A549 (cell line): ENCODE measurements at regions of chrX and their contacts with region 1.

Region 1: DNA sequence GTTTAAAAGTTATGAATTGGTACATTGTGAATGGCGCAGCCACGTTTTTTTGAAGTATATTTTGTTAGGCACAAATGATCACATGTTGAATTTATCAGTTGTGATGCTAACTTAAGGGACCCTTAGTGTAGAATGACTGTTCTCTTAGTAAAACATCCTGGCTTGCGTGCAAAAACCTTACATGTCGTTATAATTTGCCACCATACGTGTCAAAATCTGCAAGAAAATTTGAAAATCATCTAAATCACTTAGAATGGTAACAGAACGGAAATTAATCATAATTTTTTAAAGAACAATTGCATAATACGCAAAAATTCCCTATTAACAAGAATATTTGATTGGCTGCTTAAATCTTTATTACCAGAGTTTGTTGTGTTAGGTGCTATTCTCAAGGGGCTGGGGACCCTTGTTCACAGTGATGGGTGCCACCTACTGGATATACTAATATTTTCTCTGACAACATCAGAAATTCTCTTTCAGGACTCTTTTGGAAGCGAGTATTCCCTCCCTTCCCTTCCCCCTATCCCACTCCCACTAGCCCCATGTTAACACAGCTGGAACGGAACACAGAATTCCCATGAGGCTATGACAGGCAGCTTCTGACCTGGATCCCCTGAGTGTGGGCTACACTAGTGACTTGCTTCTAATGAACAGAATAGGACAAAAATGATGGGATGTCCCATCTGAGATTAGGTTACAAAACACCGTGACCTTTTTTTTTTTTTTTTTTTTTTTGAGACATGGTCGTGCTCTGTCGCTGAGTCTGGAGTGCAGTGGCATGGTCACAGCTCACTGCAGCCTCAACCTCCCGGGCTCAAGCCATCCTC is 71.8 kb downstream of the SUPT20HL2 start:
- DNase-seq: peak; percentile 48 to 65
- ATAC-seq: peak; percentile 79 to 82
- H3K4me3 ChIP-seq: no peak overlapping the region
- H3K27ac ChIP-seq: peak overlapping the region; percentile 59 to 73; a peak in 5 of 6 replicates
- H3K4me1 ChIP-seq: peaks cover 44% of the 10 kb centered on the region
- CTCF ChIP-seq: peak; percentile 60
- EP300 ChIP-seq: no peak
- POLR2A ChIP-seq: no peak
- RAD21 ChIP-seq: peak; percentile 70 to 72

Region 2: DNA sequence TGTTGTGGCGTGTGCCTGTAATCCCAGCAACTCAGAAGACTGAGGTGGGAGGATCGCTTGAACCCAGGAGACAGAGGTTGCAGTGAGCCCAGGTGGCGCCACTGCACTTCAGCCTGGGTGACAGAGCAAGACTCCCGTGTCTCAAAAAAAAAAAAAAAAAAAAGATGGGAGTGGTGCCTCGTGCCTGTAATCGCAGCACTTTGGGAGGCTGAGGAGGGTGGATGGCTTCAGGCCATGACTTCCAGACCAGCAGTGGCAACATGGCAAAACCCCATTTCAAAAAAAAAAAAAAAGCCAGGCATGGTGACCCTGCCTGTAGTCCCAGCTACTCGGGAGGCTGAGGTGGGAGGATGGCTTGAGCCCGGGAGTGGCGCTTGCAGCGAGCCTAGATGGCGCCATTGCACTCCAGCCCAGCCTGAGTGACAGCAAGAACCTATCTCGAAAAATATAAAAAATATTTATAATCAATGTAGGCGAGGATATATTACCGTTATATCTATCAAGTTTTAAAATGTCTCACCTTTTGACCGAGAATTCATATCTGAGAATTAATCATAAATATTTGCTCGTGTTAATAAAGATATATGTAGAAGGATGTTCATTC is 160.3 kb before region 1 on chrX:
- CTCF ChIA-PET with region 1: interaction called, 22 read pairs
- POLR2A ChIA-PET with region 1: no interaction called
- DNase-seq: peak in 1 of 2 experiments; percentile 91
- ATAC-seq: peak; percentile 67 to 74
- H3K4me3 ChIP-seq: peak overlapping the region; percentile 23; the same call in 1 of the 3 replicates
- H3K27ac ChIP-seq: peak overlapping the region; percentile 74 to 90
- H3K4me1 ChIP-seq: peaks cover 38% of the 10 kb centered on the region
- CTCF ChIP-seq: peak; percentile 84
- EP300 ChIP-seq: no peak
- POLR2A ChIP-seq: no peak
- RAD21 ChIP-seq: peak; percentile 63 to 69

Region 3: DNA sequence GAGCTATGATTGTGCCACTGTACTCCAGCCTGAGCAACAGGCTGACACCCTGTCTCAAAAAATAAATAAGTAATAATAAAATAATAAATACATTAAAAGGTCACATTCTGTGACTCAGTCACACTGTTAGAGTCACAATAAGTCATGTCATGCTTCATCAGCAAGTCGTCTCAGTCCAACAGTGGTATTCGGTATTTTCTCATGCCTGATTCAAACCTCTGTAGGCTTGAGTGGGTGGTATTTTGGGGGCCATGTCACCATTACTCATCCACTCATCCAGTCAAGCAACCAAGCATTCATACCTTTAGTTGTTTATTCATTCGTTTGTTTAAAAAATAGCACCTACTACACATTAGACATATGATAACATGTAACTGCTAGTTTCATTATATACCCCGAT is 25.0 kb after region 1 on chrX:
- CTCF ChIA-PET with region 1: no interaction called
- POLR2A ChIA-PET with region 1: no interaction called
- DNase-seq: peak in 1 of 2 experiments; percentile 59
- ATAC-seq: peak in 1 of 2 experiments; percentile 77; a peak in 5 of 6 replicates
- H3K4me3 ChIP-seq: no peak overlapping the region
- H3K27ac ChIP-seq: peak overlapping the region; percentile 55 to 79
- H3K4me1 ChIP-seq: peaks cover 18% of the 10 kb centered on the region
- CTCF ChIP-seq: no peak
- EP300 ChIP-seq: no peak
- POLR2A ChIP-seq: no peak
- RAD21 ChIP-seq: no peak